Endothelial cell of umbilical vein (primary cell): ENCODE measurements at regions of chr3 and their contacts with region 1.

Region 1: GRCh38 chr3:32143849-32144757 is 37.7 kb downstream of the GPD1L start:
- DNase-seq: peak; percentile 90
- H3K4me3 ChIP-seq: no peak overlapping the region
- H3K27ac ChIP-seq: no peak overlapping the region
- H3K4me1 ChIP-seq: peaks cover 23% of the 10 kb centered on the region
- H3K27me3 ChIP-seq: no peaks in the 10 kb centered on the region
- CTCF ChIP-seq: peak; percentile 71 to 76
- POLR2A ChIP-seq: no peak

Region 2: DNA sequence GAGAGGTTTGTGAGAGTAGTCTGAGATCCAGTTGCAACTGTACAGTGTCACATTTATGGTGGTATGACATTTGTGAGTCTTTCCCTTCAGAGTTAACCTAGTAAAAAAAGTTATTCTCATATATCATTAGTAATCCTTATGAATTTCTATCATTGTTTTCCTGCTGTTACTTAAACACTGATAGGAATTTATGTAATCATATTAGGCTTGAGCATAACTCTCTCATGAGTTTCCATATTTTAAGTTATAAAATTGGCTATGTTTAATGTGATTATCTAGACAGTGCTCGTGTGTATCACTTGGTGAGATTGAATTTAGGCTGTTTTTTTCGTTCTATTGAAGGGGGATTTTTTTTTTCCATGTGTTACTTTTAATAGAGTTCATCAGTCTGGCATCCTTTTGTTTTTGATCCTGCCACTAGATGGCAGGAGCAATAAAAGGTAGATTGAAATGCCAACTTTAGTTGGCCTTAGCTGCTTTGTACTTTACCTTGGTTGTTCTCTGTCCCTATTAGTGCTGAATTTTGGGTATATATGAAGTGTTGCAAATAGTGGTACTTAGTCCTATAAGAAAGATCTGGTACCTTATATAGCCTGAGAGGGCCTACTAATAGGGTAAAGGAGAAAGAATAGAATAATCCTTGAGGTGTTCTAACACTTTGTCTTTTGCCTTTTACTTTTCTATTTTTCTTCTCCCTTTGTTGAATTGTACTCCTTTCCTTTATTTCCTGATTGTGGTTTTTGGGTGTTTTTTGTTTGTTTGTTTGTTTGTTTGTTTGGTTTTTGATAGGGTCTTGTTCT is 593.5 kb before region 1 on chr3:
- CTCF ChIA-PET with region 1: interaction called, 7 read pairs
- POLR2A ChIA-PET with region 1: no interaction called
- dilution Hi-C with region 1: no loop called
- intact Hi-C with region 1: loop called (anchors 1 kb)
- DNase-seq: peak; percentile 60
- H3K4me3 ChIP-seq: no peak overlapping the region
- H3K27ac ChIP-seq: no peak overlapping the region
- H3K4me1 ChIP-seq: no peaks in the 10 kb centered on the region
- H3K27me3 ChIP-seq: no peaks in the 10 kb centered on the region
- CTCF ChIP-seq: peak; percentile 42 to 57
- POLR2A ChIP-seq: no peak

Region 3: GRCh38 chr3:31724661-31725060 is 419.4 kb before region 1 on chr3:
- CTCF ChIA-PET with region 1: interaction called, 5 read pairs
- POLR2A ChIA-PET with region 1: no interaction called
- dilution Hi-C with region 1: no loop called
- intact Hi-C with region 1: loop called (anchors 10 kb)
- DNase-seq: no peak
- H3K4me3 ChIP-seq: no peak overlapping the region
- H3K27ac ChIP-seq: no peak overlapping the region
- H3K4me1 ChIP-seq: no peaks in the 10 kb centered on the region
- H3K27me3 ChIP-seq: no peaks in the 10 kb centered on the region
- CTCF ChIP-seq: no peak
- POLR2A ChIP-seq: no peak

Region 4: GRCh38 chr3:31858439-31858838 is 285.7 kb before region 1 on chr3:
- CTCF ChIA-PET with region 1: no interaction called
- POLR2A ChIA-PET with region 1: no interaction called
- dilution Hi-C with region 1: no loop called
- intact Hi-C with region 1: loop called (anchors 1 kb)
- DNase-seq: peak; percentile 11
- H3K4me3 ChIP-seq: no peak overlapping the region
- H3K27ac ChIP-seq: no peak overlapping the region
- H3K4me1 ChIP-seq: no peaks in the 10 kb centered on the region
- H3K27me3 ChIP-seq: no peaks in the 10 kb centered on the region
- CTCF ChIP-seq: no peak
- POLR2A ChIP-seq: no peak

Region 5: GRCh38 chr3:31968927-31969418 is 175.1 kb before region 1 on chr3:
- CTCF ChIA-PET with region 1: interaction called, 5 read pairs
- POLR2A ChIA-PET with region 1: no interaction called
- dilution Hi-C with region 1: no loop called
- intact Hi-C with region 1: loop called (anchors 5 kb)
- DNase-seq: peak; percentile 57
- H3K4me3 ChIP-seq: peak overlapping the region in 1 of 3 experiments; percentile 24
- H3K27ac ChIP-seq: peak overlapping the region; percentile 62
- H3K4me1 ChIP-seq: peaks cover 37% of the 10 kb centered on the region
- H3K27me3 ChIP-seq: no peaks in the 10 kb centered on the region
- CTCF ChIP-seq: no peak
- POLR2A ChIP-seq: no peak

Region 6: GRCh38 chr3:32018757-32019564 is 125.1 kb before region 1 on chr3:
- CTCF ChIA-PET with region 1: interaction called, 136 read pairs
- POLR2A ChIA-PET with region 1: interaction called, 5 read pairs
- dilution Hi-C with region 1: no loop called
- intact Hi-C with region 1: loop called (anchors 1 kb)
- DNase-seq: peak; percentile 63
- H3K4me3 ChIP-seq: no peak overlapping the region
- H3K27ac ChIP-seq: no peak overlapping the region
- H3K4me1 ChIP-seq: no peaks in the 10 kb centered on the region
- H3K27me3 ChIP-seq: peaks cover 0 to 3% of the 10 kb centered on the region in 2 experiments
- CTCF ChIP-seq: peak; percentile 58 to 62
- POLR2A ChIP-seq: no peak

Region 7: GRCh38 chr3:32154205-32154579 is 10.1 kb after region 1 on chr3:
- CTCF ChIA-PET with region 1: interaction called, 27 read pairs
- POLR2A ChIA-PET with region 1: no interaction called
- dilution Hi-C with region 1: no loop called
- intact Hi-C with region 1: no loop called
- DNase-seq: no peak
- H3K4me3 ChIP-seq: no peak overlapping the region
- H3K27ac ChIP-seq: no peak overlapping the region
- H3K4me1 ChIP-seq: no peaks in the 10 kb centered on the region
- H3K27me3 ChIP-seq: no peaks in the 10 kb centered on the region
- CTCF ChIP-seq: peak; percentile 27 to 39
- POLR2A ChIP-seq: no peak